ENCODE measurements at regions of chr7 and their contacts with region 1.

Region 1: DNA sequence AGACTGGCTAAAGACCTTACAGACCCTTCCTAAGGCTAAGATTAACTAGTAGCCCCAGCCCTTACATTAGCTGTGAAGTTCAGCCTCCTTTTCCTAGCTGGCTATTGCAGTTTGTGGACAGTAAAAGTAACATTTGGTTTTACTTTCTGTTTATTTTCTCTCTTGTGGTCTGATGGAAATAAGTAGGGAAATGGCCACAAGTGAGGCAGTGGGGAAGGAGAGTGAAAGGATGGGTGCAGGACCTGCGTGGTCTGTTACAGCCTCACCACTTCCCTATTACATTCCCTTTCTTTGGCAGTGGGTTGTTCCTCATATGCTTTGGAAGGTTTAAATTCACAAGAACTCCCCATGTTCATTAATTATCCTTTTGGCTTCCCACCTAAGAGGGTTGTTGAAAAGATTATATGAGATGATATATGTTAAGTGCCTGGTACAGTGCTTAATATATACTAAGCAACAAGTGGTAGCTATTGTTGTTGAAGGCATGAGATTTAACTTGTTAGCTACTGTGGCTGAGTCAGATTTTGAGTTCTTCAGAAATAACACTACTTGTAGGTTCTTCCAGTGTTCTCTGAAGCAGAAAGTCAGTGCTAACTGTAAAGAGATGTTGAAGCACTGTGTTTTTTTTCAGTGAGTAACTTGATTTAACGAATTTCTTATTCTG is 181.7 kb downstream of the ST7 start:
- DNase-seq: no peak
- H3K4me3 ChIP-seq: no peak overlapping the region
- CTCF ChIP-seq: no peak

Region 2: DNA sequence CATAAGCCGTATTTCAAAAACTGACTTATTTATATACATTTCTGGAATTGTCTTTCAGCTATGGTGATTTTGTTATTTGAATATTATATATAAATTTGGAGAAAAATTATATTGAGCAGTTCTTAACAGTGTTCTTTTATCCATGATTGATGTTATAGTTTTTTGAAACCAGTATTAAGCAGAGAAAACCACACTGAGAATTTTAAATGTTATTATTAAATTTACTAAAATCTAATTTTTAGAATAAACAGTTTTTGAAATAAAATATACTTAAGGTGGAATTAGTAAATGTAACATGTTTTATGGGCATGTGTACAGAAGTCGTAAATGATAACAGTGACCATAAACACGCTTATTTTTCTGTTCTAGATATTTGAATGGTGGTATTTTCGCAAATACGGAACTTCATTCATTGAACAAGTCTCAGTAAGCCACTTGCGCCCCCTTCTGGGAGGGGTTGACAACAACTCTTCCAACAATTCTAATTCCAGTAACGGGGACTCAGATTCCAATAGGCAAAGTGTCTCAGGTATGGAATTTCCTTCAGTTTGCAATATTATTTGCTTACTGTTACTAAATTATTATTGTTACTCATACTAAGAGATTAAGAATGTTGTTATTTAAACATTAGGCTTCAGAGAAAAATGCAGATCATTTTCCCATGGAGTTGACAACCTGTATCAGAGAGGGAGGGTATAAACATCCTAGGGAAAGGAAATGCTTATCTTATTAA is 15.7 kb before region 1 on chr7:
- CTCF ChIA-PET with region 1: interaction called, 29 read pairs
- POLR2A ChIA-PET with region 1: no interaction called
- DNase-seq: no peak
- H3K4me3 ChIP-seq: no peak overlapping the region
- CTCF ChIP-seq: peak; percentile 79

Region 3: GRCh38 chr7:117157241-117158209 is 22.5 kb after region 1 on chr7:
- CTCF ChIA-PET with region 1: interaction called, 11 read pairs
- POLR2A ChIA-PET with region 1: no interaction called
- DNase-seq: peak; percentile 82
- H3K4me3 ChIP-seq: no peak overlapping the region
- CTCF ChIP-seq: peak; percentile 42